ENCODE measurements at regions of chr1 and their contacts with region 1.

Region 1: GRCh38 chr1:54400329-54400728 is 5.9 kb downstream of the SSBP3 start:
- DNase-seq: no peak
- H3K4me3 Mint-ChIP-seq: peak overlapping the region; percentile 68
- H3K27ac Mint-ChIP-seq: peak overlapping the region; percentile 88
- H3K4me1 Mint-ChIP-seq: peaks cover 88% of the 10 kb centered on the region
- H3K27me3 Mint-ChIP-seq: no peaks in the 10 kb centered on the region

Region 2: GRCh38 chr1:54230507-54231339 is 169.6 kb before region 1 on chr1:
- intact Hi-C with region 1: loop called (anchors 2 kb)
- DNase-seq: no peak
- H3K4me3 Mint-ChIP-seq: no peak overlapping the region
- H3K27ac Mint-ChIP-seq: peak overlapping the region; percentile 86
- H3K4me1 Mint-ChIP-seq: peaks cover 27% of the 10 kb centered on the region
- H3K27me3 Mint-ChIP-seq: no peaks in the 10 kb centered on the region

Region 3: DNA sequence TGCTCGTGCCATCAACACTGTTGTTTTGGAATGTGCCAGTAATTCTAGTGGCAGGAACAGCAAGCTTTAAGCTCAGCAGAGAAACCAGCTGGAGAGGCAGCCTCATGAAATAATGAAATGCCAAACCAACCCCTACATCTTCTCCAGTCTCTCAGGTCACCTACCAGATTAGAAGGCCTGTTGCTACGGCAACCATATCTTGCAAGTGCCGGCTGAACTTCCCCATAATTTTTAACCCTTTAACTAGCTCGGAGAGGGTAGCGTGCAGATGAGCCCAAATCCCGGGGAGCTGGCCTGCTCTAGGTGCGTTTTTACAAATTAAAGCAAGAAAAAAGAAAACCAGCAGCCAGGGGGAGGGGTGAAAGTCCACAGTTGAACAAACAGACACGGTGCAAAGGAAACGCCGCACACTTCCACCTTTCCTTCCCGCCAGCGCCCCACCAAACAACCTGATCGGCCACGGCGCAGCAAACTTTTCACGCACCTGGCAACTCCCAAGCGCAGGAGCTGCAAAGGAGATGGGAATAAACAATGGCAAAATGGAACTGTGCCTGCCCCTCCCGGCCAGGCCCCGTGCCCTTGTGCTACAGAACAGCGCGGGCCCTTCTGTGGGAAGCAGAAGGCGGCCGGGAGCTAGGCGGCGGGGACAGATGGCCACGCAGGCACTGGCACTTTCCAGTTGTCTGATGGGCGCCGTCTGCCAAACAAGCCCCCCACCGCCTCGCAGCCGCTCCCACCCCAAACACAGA is 44.2 kb before region 1 on chr1:
- intact Hi-C with region 1: loop called (anchors 1 kb)
- DNase-seq: no peak
- H3K4me3 Mint-ChIP-seq: peak overlapping the region; percentile 87
- H3K27ac Mint-ChIP-seq: peak overlapping the region; percentile 94
- H3K4me1 Mint-ChIP-seq: peaks cover 91% of the 10 kb centered on the region
- H3K27me3 Mint-ChIP-seq: no peaks in the 10 kb centered on the region

Region 4: DNA sequence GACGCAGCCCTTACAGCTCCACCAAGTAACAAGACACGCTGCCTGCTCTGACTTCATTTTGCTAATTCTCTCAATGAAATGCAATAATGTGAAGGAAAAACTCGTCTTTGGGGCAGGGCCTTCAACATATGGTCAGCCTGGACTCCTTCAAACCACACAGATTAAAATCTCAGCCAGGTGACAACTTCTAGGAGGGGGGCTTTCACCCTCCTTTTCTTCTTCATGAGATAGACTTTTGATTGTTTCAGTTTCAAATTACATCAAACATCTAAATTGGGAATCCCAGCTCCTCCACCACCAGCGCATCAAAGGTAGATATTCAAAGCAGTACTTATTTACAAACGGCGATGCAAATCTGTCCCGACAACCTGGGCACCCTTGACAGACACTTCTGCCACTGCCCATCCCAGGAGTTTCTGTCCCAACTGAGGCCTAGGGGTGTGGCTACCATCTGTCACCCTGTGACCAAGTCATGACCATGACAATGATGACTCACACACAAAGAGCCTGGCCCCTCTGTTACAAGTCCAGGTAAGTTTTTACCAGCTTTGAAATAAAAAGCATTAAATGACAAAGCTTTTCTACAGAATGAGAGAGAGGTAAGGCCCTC is 23.8 kb before region 1 on chr1:
- intact Hi-C with region 1: loop called (anchors 1 kb)
- DNase-seq: peak; percentile 7
- H3K4me3 Mint-ChIP-seq: no peak overlapping the region
- H3K27ac Mint-ChIP-seq: peak overlapping the region; percentile 67
- H3K4me1 Mint-ChIP-seq: peaks cover 77% of the 10 kb centered on the region
- H3K27me3 Mint-ChIP-seq: no peaks in the 10 kb centered on the region

Measured in activated T-helper 1 cell treated with anti-CD3 and anti-CD28 coated beads, Interleukin-12 subunit alpha, Interleukin-12 subunit beta, Interleukin-2, Interleukin-4 antibody, amounts not matched to agents 30 ng/mL and 10 ng/mL and 1 ng/mL, durations not matched to agents 14 hours and 24 hours and 36 hours (primary cell).